IMR-90 (cell line): ENCODE measurements at regions of chr1 and their contacts with region 1.

Region 1: DNA sequence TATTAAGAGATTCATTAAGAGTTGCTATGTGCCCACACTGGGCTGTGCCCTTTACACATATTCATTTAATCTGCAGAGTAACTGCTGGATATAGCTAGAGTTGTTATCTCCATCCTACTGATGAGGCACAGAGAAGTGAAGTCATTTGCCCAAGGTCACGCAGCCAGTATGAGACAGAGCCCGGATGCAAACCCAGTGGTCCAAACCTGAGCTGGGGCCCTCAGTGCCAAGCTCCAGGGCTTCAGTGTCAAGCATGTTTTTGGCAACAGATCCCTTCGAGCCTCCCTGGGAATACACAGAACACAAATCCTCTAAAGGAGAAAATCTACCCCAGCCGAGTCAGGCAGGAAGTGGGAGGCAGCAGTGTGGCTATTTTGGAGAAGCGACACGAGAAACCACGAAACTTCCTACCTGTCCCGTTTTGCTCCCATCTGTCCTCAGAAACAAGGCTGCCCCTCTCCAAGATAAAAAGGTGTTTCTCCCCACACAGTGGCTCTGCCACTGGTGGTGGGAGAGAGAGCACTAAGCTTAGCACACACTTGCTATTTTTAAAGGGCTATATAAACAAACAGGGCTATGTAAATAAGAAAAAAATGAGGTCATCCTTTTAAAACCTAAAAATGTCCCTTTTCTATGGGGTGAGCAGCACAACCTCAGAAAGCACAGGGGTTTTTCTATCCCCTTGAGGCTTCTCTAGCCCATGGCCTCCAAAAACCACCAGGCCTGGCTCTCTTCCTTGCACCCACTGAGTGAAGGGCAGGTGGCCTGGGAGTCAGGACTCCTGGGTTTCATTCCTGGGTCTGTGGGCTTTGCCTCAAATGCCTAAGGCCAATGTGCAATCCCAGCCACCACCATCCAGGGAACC is 138.6 kb upstream of the EDN2 start:
- DNase-seq: peak; percentile 56
- ATAC-seq: peak; percentile 38
- H3K4me3 ChIP-seq: no peak overlapping the region
- H3K27ac ChIP-seq: no peak overlapping the region
- H3K4me1 ChIP-seq: peaks cover 32% of the 10 kb centered on the region
- H3K27me3 ChIP-seq: no peaks in the 10 kb centered on the region
- CTCF ChIP-seq: no peak
- POLR2A ChIP-seq: no peak
- RAD21 ChIP-seq: no peak

Region 2: GRCh38 chr1:41360993-41361753 is 261.9 kb before region 1 on chr1 and contains the start of gene FOXO6:
- CTCF ChIA-PET with region 1: no interaction called
- POLR2A ChIA-PET with region 1: no interaction called
- dilution Hi-C with region 1: no loop called
- in situ Hi-C with region 1: no loop called
- intact Hi-C with region 1: loop called (anchors 5 kb)
- DNase-seq: peak; percentile 93
- ATAC-seq: peak; percentile 99
- H3K4me3 ChIP-seq: peak within 1 kb of the TSS; percentile 68
- H3K27ac ChIP-seq: no peak within 1 kb of the TSS
- H3K4me1 ChIP-seq: 0 out of 2 replicates have a peak, but pooled peaks cover 1% of the 10 kb centered on the region
- H3K27me3 ChIP-seq: peaks cover 66% of the 10 kb centered on the region
- CTCF ChIP-seq: peak; percentile 48
- POLR2A ChIP-seq: no peak
- RAD21 ChIP-seq: no peak
- total RNA-seq, gene FOXO6: not detected in 2 replicates

Region 3: GRCh38 chr1:41662061-41662764 is 39.1 kb after region 1 on chr1:
- CTCF ChIA-PET with region 1: no interaction called
- POLR2A ChIA-PET with region 1: no interaction called
- dilution Hi-C with region 1: no loop called
- in situ Hi-C with region 1: loop called (anchors 5 kb)
- intact Hi-C with region 1: loop called (anchors 5 kb)
- DNase-seq: peak; percentile 83
- ATAC-seq: peak; percentile 92
- H3K4me3 ChIP-seq: peak overlapping the region; percentile 62
- H3K27ac ChIP-seq: peak overlapping the region; percentile 61; the same call in 1 of the 2 replicates
- H3K4me1 ChIP-seq: peaks cover 22% of the 10 kb centered on the region
- H3K27me3 ChIP-seq: no peaks in the 10 kb centered on the region
- CTCF ChIP-seq: no peak
- POLR2A ChIP-seq: peak; percentile 87
- RAD21 ChIP-seq: no peak; the same call in 1 of the 2 replicates